ENCODE measurements at regions of chr7 and their contacts with region 1.

Region 1: DNA sequence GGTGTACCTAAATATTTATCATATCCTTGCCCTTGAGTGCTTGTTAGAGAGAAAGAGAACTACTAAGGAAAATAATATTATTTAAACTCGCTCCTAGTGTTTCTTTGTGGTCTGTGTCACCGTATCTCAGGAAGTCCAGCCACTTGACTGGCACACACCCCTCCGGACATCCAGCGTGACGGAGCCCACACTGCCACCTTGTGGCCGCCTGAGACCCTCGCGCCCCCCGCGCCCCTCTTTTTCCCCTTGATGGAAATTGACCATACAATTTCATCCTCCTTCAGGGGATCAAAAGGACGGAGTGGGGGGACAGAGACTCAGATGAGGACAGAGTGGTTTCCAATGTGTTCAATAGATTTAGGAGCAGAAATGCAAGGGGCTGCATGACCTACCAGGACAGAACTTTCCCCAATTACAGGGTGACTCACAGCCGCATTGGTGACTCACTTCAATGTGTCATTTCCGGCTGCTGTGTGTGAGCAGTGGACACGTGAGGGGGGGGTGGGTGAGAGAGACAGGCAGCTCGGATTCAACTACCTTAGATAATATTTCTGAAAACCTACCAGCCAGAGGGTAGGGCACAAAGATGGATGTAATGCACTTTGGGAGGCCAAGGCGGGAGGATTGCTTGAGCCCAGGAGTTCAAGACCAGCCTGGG is 11.4 kb downstream of the SERPINE1 start:
- DNase-seq: peak; percentile 100
- ATAC-seq: peak; percentile 84
- H3K4me3 ChIP-seq: no peak overlapping the region
- H3K27ac ChIP-seq: peak overlapping the region; percentile 91
- H3K4me1 ChIP-seq: peaks cover 39% of the 10 kb centered on the region
- H3K27me3 ChIP-seq: no peaks in the 10 kb centered on the region
- CTCF ChIP-seq: peak; percentile 94

Region 2: DNA sequence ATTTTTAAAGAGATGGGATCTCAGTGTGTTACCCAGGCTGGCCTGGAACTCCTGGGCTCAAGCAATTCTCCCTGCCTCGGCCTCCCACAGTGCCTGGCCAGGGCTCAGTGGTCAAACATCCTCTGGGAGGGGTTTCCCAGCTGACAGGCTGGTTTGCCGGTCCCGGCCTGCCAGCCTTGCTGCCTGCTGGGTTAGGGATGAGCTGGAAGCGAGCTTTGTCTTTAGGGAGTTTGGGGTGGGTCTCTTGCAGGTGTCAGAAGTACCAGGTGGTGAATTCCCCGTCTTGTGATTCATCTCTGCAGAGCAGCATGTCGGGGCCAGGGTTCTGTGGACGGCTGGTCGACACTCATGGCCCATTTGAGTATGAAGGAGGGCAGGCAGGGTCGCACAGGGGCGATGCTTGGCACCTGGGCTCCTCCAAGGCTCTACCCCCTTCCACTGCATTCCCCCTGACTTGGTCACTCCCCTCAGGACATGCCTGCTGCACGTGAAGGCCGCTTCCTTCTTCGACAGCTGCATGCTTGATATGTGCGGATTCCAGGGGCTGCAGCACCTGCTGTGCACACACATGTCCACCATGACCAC is 374.7 kb before region 1 on chr7:
- CTCF ChIA-PET with region 1: no interaction called
- POLR2A ChIA-PET with region 1: no interaction called
- in situ Hi-C with region 1: no loop called
- intact Hi-C with region 1: no loop called
- DNase-seq: no peak
- ATAC-seq: no peak
- H3K4me3 ChIP-seq: no peak overlapping the region
- H3K27ac ChIP-seq: no peak overlapping the region
- H3K4me1 ChIP-seq: no peaks in the 10 kb centered on the region
- H3K27me3 ChIP-seq: no peaks in the 10 kb centered on the region
- CTCF ChIP-seq: no peak

Region 3: DNA sequence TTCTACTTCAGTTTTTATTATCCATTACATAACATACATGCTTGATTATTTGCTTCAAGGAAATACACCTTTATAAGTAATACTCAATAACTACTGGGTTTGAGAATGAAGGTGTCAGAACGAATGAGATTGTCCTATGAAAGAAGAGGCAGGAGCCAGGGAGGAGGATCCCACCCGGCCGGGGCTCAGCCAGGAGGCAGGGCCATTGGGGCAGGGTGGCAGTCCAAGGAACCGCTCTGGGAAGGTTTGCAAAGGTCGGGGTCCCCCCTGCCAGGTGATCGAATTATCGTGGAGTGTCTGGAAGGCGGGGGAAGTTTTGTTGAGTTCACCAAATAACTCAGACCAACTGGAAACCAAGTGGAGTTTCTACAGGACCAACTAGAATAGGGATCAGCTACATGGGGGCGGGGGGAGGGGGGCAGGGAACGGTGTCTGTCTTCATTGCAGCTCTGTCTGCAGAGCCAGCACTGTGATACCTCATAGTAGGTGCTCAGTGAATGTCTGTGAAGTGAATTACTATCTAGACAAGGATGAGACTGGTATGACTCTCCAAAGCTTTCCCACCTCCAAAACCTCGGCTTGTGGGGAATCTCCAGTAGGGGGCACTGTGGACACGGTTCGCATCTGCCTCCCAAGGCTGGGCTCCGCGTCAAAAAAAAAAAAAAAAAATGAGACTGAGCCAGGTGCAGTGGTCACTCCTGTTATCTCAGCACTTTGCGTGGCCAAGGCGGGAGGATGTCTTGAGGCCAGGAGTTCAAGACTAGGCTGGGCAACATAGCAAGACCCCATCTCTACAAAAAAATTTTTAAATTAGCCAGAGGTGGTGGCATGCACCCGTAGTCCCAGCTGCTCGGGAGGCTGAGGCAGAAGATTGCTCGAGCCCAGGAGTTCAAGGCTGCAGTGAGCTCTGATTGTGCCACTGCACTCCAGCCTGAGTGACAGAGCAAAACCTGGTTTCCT is 43.6 kb before region 1 on chr7:
- CTCF ChIA-PET with region 1: interaction called, 4 read pairs
- POLR2A ChIA-PET with region 1: interaction called, 5 read pairs
- in situ Hi-C with region 1: no loop called
- intact Hi-C with region 1: loop called (anchors 2 kb)
- DNase-seq: no peak
- ATAC-seq: peak; percentile 80
- H3K4me3 ChIP-seq: peak overlapping the region in 1 of 2 experiments; percentile 6; a peak in 1 of 4 replicates
- H3K27ac ChIP-seq: peak overlapping the region; percentile 73
- H3K4me1 ChIP-seq: peaks cover 38% of the 10 kb centered on the region
- H3K27me3 ChIP-seq: no peaks in the 10 kb centered on the region
- CTCF ChIP-seq: peak; percentile 89

Region 4: GRCh38 chr7:101156277-101156676 is 17.9 kb after region 1 on chr7:
- CTCF ChIA-PET with region 1: interaction called, 26 read pairs
- POLR2A ChIA-PET with region 1: interaction called, 6 read pairs
- in situ Hi-C with region 1: no loop called
- intact Hi-C with region 1: no loop called
- DNase-seq: no peak
- ATAC-seq: no peak
- H3K4me3 ChIP-seq: no peak overlapping the region
- H3K27ac ChIP-seq: no peak overlapping the region
- H3K4me1 ChIP-seq: peaks cover 25% of the 10 kb centered on the region
- H3K27me3 ChIP-seq: no peaks in the 10 kb centered on the region
- CTCF ChIP-seq: no peak; the same call in 1 of the 2 replicates

Region 5: DNA sequence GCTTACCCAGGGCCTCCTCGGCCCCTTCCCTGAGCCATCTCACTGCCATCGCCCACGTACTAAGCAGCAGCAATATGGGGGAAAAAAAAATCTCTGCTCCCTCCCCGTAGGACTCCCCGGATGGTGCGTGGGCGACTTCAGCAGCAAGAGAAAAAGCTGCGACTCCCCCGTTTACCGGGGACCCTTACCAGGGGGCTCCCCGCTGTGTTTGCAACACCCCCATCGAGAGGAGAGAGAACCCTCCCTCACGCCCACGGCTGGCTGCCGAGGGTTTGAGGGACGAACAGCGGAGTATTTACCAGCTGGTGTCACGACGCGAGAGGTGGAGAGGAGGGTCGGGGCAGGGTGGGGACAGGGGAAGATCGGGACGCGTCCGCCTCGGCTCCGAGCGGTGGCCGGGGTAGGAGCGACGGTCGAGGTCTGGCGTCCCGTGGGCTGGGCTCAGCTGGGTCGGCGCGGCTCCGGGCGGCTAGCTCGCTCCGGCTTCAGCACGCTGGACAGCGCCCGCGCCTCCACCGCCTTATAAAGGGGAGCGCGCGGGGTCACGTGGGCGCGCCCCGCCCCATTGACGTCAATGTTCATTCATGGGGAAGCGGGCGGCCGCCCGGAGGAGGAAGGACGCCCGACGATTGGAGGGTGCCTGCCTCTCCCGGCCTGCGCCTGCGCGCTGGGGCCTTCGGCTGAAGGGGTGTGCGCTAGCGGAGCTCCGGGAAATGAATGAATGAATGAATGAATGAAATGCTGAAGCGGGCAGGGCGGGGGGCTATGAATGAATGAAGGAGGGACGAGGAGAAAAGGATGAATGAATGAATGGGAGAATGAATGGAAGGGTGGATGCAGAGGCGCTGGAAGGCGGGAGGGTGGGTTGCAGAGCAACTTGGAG is 27.0 kb after region 1 on chr7 and contains the start of gene VGF:
- CTCF ChIA-PET with region 1: interaction called, 14 read pairs
- POLR2A ChIA-PET with region 1: interaction called, 7 read pairs
- in situ Hi-C with region 1: no loop called
- intact Hi-C with region 1: no loop called
- DNase-seq: peak; percentile 89
- ATAC-seq: peak; percentile 73
- H3K4me3 ChIP-seq: peak within 1 kb of the TSS; percentile 59 to 72
- H3K27ac ChIP-seq: no peak within 1 kb of the TSS
- H3K4me1 ChIP-seq: peaks cover 51% of the 10 kb centered on the region
- H3K27me3 ChIP-seq: peaks cover 3% of the 10 kb centered on the region
- CTCF ChIP-seq: no peak
- total RNA-seq, gene VGF: 4.4 TPM

Region 6: DNA sequence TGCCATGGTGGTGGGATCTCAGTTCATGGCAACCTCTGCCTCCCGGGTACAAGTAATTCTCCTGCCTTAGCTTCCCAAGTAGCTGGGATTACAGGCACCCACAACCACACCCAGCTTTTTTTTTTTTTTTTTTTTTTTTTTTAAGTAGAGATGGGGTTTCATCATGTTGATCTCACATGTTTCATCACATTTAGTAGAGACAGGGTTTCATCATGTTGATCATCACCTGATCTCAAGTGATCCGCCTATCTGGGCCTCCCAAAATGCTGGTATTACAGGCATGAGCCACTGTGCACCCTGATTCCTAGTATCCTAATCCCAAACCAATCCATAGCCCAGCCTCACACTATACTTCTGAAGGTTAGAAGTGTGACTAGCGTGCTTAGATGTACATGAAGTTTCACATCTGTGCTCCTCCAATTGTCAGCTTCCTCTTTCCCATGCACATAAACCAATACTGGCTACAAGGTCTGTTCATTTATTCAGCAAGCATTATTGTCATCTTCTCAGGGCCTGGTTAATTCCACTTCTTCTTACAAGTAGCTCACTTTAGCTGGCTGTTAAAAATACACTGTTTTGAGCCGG is 48.6 kb after region 1 on chr7:
- CTCF ChIA-PET with region 1: interaction called, 47 read pairs
- POLR2A ChIA-PET with region 1: no interaction called
- in situ Hi-C with region 1: no loop called
- intact Hi-C with region 1: no loop called
- DNase-seq: no peak
- ATAC-seq: no peak
- H3K4me3 ChIP-seq: no peak overlapping the region
- H3K27ac ChIP-seq: no peak overlapping the region
- H3K4me1 ChIP-seq: no peaks in the 10 kb centered on the region
- H3K27me3 ChIP-seq: no peaks in the 10 kb centered on the region
- CTCF ChIP-seq: no peak